ENCODE measurements at regions of chr4 and their contacts with region 1.

Region 1: DNA sequence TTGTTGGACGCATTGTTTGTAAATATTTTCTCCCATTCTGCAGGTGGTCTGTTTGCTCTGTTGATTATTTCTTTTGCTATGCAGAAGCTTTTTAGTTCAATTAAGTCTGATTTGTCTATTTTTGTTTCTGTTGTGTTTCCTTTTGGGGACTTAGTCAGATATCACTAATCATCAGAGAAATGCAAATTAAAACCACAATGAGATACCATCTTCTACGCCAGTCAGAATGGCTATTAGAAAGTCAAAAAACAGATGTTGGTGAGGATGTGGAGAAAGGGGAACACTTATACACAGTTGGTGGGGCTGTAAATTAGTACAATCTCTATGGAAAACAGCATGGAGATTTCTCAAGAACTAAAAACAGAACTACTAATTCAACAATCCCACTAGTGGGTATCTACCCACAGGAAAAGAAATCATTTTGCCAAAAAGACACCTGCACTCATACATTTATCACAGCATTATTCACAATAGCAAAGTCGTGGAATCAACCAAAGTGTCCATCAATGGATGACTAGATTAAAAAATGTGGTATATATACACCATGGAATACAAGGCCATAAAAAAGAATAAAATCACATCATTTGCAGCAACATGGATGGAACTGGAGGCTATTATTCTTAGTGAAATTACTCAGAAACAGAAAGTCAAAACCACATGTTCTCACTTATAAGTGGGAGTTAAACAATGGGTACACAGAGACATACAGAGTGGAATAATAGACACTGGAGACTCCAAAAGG is 8.1 kb downstream of the COQ2 start:
- DNase-seq: no peak
- ATAC-seq: no peak

Region 2: GRCh38 chr4:82715725-82716617 is 560.5 kb before region 1 on chr4:
- intact Hi-C with region 1: no loop called
- DNase-seq: no peak
- ATAC-seq: peak; percentile 65

Region 3: DNA sequence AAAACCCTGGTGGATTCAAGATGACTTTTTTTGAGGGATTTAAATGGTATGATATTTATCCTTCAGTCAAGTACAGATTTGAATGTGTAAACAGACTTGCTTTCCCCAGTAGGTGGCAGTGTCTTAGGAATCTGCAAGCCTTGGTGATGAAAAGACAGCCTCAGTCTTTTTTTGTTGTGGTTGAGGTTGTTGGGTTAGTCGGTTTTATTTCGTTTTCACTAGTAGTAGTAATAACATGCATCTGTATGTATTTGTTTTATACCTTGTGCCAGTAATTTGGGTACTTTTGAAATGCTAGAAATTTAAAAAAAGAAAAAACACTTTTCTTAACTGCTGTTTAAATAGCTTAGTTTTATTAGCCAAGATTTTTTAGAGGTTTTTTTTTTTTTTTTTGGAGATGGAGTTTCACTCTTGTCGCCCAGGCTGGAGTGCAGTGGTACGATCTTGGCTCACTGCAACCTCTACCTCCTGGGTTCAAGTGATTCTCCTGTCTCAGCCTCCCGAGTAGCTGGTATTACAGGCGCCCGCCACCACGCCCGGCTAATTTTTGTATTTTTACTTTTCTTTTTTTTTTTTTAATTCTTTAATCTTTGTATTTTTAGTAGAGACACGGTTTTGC is 202.3 kb before region 1 on chr4:
- intact Hi-C with region 1: loop called (anchors 10 kb)
- DNase-seq: no peak
- ATAC-seq: peak; percentile 57

Measured in sciatic nerve (tissue), 2 donors.